Naive thymus-derived CD4-positive, alpha-beta T cell (primary cell): ENCODE measurements at regions of chr16 and their contacts with region 1.

Region 1: DNA sequence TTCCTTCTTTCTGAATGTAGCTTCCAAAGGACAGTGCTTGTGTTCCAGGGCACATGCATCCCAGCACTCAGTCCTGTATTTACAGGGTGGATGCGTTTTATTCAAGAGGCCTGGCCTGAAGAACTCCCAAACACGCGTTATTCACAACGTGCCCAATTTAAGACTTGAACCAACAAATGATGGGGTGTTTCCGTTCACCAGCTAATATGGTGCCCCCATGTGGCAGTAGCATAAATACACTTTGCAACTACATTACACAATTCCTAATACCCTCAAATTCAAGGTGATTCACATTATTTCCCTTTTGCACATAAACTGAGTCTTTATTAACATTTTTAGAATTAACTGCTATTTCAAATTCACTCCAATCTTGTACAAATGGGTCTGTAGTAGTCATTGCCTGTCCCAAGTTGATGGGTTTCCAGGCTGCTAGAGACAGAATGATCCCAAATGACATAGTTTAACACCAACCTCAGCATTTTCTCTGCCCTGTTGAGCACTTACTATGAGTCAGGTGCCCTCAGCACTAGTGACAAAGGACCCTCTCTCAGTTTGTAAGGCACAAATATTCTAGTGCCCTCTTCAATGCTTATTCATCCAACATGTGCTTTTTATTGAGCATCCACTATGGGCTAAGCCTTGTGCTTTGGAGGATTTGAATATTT is 26.9 kb downstream of the HSD17B2 start:
- DNase-seq: peak in 1 of 9 donors; percentile 5
- ATAC-seq: no peak
- H3K4me3 ChIP-seq: no peak overlapping the region
- H3K4me3 Mint-ChIP-seq: no peak overlapping the region
- H3K27ac ChIP-seq: no peak overlapping the region
- H3K27ac Mint-ChIP-seq: no peak overlapping the region
- H3K4me1 ChIP-seq: no peaks in the 10 kb centered on the region
- H3K4me1 Mint-ChIP-seq: no peaks in the 10 kb centered on the region
- H3K27me3 ChIP-seq: no peaks in the 10 kb centered on the region
- H3K27me3 Mint-ChIP-seq: peaks cover 6 to 31% (median 17%) of the 10 kb centered on the region in 5 donors

Region 2: DNA sequence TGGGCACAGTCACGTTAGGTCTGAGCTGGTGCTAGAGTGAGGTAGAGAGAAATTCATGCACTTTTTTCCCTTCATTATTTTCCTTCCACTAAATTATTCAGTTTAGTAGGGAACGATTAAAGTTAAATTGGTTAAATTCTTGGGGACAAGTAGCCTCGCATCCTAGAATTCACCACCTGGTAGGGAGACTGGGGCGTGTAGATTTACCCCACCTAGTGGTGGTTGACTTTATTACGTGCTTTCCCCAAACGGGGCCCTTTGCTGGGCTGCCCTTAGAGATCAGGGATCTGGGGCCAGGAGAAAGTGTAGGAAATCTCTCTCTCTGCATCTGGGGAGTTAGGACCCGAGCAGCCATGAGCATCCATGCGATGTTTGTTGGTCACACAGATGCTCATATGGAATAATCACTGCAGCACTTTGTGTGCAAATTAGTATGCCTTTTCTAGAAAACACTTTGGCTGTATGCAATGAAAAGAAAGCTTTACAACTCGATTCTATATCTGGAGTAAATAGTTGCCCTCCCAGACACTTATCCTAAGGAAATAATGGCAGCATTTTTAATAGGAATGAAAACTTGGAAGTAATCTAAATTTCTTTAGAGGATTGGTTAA is 175.9 kb before region 1 on chr16:
- CTCF ChIA-PET with region 1: no interaction called
- POLR2A ChIA-PET with region 1: no interaction called
- intact Hi-C with region 1: loop called (anchors 1 kb)
- DNase-seq: peak in 4 of 9 donors; percentile 13 to 30 (median 18)
- ATAC-seq: peak; percentile 67
- H3K4me3 ChIP-seq: no peak overlapping the region
- H3K4me3 Mint-ChIP-seq: no peak overlapping the region
- H3K27ac ChIP-seq: no peak overlapping the region
- H3K27ac Mint-ChIP-seq: no peak overlapping the region
- H3K4me1 ChIP-seq: no peaks in the 10 kb centered on the region
- H3K4me1 Mint-ChIP-seq: peaks cover 0 to 1% (median 0%) of the 10 kb centered on the region in 7 donors
- H3K27me3 ChIP-seq: no peaks in the 10 kb centered on the region
- H3K27me3 Mint-ChIP-seq: no peaks in the 10 kb centered on the region

Region 3: GRCh38 chr16:81940781-81941560 is 121.0 kb before region 1 on chr16:
- CTCF ChIA-PET with region 1: no interaction called
- POLR2A ChIA-PET with region 1: no interaction called
- intact Hi-C with region 1: loop called in 1 of 2 experiments (anchors 1 kb)
- DNase-seq: peak in 6 of 9 donors; percentile 8 to 45 (median 20)
- ATAC-seq: no peak
- H3K4me3 ChIP-seq: no peak overlapping the region
- H3K4me3 Mint-ChIP-seq: no peak overlapping the region
- H3K27ac ChIP-seq: no peak overlapping the region
- H3K27ac Mint-ChIP-seq: peak overlapping the region in 2 of 9 donors; percentile 0
- H3K4me1 ChIP-seq: no peaks in the 10 kb centered on the region
- H3K4me1 Mint-ChIP-seq: peaks cover 0 to 3% (median 0%) of the 10 kb centered on the region in 7 donors
- H3K27me3 ChIP-seq: no peaks in the 10 kb centered on the region
- H3K27me3 Mint-ChIP-seq: peaks cover 0 to 15% (median 2%) of the 10 kb centered on the region in 5 donors

Region 4: DNA sequence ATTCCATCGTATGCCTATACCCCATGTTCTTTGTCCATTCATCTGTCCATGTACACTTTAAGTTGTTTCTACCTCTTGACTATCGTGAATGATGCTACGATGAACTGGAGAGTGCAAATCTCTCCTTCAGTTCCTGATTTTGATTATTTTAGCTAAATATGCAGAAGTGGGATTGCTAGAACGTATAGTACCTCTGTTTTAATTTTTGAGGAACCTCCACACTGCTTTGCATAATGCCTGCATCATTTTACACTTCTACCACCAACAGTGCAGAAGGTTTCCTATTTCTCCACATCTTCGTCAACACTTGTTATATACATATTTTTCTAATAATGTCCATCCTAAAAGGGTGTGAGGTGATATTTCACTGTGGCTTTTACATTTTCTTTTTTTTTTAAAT is 94.6 kb before region 1 on chr16:
- CTCF ChIA-PET with region 1: no interaction called
- POLR2A ChIA-PET with region 1: no interaction called
- intact Hi-C with region 1: no loop called
- DNase-seq: no peak
- ATAC-seq: peak; percentile 57
- H3K4me3 ChIP-seq: no peak overlapping the region
- H3K4me3 Mint-ChIP-seq: no peak overlapping the region
- H3K27ac ChIP-seq: no peak overlapping the region
- H3K27ac Mint-ChIP-seq: no peak overlapping the region
- H3K4me1 ChIP-seq: no peaks in the 10 kb centered on the region
- H3K4me1 Mint-ChIP-seq: no peaks in the 10 kb centered on the region
- H3K27me3 ChIP-seq: no peaks in the 10 kb centered on the region
- H3K27me3 Mint-ChIP-seq: peaks cover 9 to 26% (median 17%) of the 10 kb centered on the region in 5 donors